Stomach (tissue), 19 donors: ENCODE measurements at regions of chr7 and their contacts with region 1.

Region 1: GRCh38 chr7:139777948-139778841 is at the start of gene HIPK2:
- DNase-seq: peak; percentile 80 to 95
- H3K4me3 ChIP-seq: peak within 1 kb of the TSS; percentile 85 to 92 (median 88)
- H3K27ac ChIP-seq: peak within 1 kb of the TSS; percentile 95 to 98 (median 97)
- H3K4me1 ChIP-seq: peaks cover 28 to 42% (median 37%) of the 10 kb centered on the region in 4 donors
- H3K27me3 ChIP-seq: no peaks in the 10 kb centered on the region
- CTCF ChIP-seq: no peak
- EP300 ChIP-seq: no peak
- POLR2A ChIP-seq: no peak
- total RNA-seq, gene HIPK2: 9.3 to 103 (median 60.7) TPM

Region 2: DNA sequence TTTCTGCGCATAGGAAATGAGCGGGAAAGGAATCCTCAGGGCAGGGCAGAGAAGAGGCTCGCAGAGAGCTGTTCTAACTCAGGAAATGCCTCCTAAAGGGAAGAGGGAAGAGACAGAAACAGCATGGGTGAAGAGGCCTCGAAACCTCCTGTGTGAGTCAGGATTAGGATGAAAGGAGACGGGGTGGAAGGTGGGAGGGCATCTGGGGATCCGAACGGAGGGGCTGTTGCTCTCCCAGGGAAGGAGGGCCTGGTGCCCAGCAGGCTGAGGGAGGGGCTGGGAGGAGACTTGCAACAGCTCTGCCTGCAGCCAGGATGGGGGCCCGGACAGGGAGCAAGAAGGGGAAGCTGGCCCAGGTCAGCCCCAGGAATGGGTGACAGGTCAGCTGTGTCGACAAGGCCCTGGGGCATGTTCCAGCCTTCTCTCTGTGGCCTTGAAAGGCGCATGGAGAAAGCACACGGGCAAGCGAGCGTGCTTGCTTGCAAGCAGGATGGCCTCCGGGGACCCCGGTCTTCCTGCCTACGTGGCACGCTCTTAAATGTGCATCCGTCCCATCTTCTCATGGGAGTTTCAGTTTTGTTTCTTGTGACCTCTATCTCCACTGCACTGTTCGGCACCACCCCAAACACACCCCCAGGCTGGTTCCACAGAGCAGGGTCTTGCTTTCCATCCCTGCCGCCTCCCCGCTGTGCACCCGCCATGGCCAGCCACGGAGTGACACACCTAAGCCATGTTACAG is 63.9 kb before region 1 on chr7:
- intact Hi-C with region 1: loop called (anchors 10 kb)
- DNase-seq: peak; percentile 26 to 56
- H3K4me3 ChIP-seq: no peak overlapping the region
- H3K27ac ChIP-seq: peak overlapping the region in 3 of 5 donors; percentile 25 to 65 (median 52)
- H3K4me1 ChIP-seq: peaks cover 0 to 36% (median 15%) of the 10 kb centered on the region in 4 donors
- H3K27me3 ChIP-seq: no peaks in the 10 kb centered on the region
- CTCF ChIP-seq: no peak
- EP300 ChIP-seq: no peak
- POLR2A ChIP-seq: no peak

Region 3: DNA sequence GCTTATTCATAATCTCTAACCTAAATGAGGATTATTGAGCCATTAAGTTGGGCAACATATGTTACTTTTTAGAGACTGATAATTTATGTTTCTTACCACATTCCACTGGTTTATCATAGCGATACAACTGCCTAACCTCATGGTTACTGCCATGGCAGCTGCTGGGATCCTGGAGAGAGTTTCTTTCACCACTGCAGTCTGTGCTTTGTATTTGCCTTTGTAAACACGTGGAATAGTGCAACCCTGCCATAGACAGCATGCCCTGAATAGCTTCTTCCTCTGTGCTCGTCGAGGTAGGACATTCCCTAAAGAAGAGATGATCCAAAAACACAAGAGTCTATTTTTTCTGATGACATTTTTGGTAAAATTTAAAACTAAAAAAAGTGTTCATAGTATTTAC is 318.3 kb after region 1 on chr7:
- intact Hi-C with region 1: no loop called
- DNase-seq: no peak
- H3K4me3 ChIP-seq: no peak overlapping the region
- H3K27ac ChIP-seq: no peak overlapping the region
- H3K4me1 ChIP-seq: no peaks in the 10 kb centered on the region
- H3K27me3 ChIP-seq: no peaks in the 10 kb centered on the region
- CTCF ChIP-seq: no peak
- EP300 ChIP-seq: no peak
- POLR2A ChIP-seq: no peak